ENCODE measurements at regions of chr4 and their contacts with region 1.

Region 1: DNA sequence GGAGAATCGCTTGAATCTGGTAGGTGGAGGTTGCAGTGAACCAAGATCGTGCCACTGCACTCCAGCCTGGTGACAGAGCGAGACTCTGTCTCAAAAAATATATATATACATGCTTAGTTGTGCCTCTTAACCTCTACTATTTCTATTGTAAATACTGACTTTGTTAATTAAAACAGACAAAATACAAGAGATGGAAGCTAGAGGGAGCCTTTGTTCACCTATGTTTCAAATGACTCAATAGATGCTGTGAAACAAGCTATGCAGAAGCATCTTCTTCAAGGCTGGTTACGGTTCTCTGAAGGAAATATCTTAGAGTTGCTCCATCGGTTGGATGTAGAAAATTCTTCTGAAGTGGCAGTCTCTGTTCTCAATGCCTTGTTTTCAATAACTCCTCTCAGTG is 6.2 kb downstream of the NCAPG start:
- DNase-seq: peak; percentile 24
- H3K4me3 ChIP-seq: peak overlapping the region in 1 of 2 experiments; percentile 33; a peak in 1 of 4 replicates
- H3K27ac ChIP-seq: no peak overlapping the region; a peak in 2 of 4 replicates
- H3K4me1 ChIP-seq: peaks cover 0 to 6% of the 10 kb centered on the region in 2 experiments; a peak in 2 of 4 replicates
- H3K27me3 ChIP-seq: no peaks in the 10 kb centered on the region
- CTCF ChIP-seq: peak; percentile 71
- EP300 ChIP-seq: no peak
- RAD21 ChIP-seq: peak; percentile 80

Region 2: GRCh38 chr4:17985832-17986231 is 168.8 kb after region 1 on chr4:
- CTCF ChIA-PET with region 1: no interaction called
- POLR2A ChIA-PET with region 1: no interaction called
- DNase-seq: no peak
- H3K4me3 ChIP-seq: no peak overlapping the region
- H3K27ac ChIP-seq: no peak overlapping the region
- H3K4me1 ChIP-seq: peaks cover 0 to 4% of the 10 kb centered on the region in 2 experiments; a peak in 1 of 4 replicates
- H3K27me3 ChIP-seq: no peaks in the 10 kb centered on the region
- CTCF ChIP-seq: no peak
- EP300 ChIP-seq: no peak
- RAD21 ChIP-seq: no peak

Region 3: DNA sequence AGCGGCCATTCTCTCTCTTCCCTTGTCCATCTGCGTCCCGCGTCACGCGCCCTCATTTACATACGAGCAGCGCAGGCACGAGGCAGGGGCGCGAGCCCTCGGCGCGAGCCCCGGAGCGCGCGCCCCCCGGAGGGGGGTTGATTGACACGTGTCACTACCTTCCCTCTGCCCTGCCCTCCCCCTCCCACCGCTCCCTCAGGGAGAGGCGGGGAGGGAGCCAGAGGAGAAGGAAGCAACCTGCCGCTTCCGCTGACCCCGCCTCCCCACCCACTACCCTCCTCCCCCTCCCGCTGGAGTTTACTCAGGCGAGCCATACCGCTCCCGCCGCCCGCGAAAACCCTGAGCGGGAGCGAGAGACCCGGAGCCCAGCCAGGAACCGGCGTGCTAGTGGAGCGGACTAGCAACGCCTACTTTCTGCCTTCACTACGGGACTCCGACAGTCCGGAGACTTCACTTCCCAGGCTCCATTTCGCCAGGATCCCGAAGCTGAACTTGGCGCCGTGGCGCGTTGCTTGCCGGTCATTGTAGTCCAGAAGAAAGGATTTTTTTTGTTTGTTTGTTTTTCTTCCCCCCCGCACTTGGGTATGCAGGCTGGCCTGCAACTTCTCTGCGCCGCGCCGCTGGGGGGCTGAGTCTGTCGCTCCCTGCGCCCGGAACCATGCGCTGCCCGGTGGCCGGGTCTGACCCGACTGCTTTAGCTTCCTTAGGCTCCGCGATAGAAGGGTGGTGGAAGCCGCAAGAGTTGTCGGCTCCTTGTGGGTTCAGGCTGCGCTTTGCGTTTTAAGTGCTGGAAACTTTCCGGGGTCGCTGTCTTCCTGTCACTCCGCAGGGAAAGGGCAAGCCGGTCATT is 204.9 kb after region 1 on chr4 and contains the start of gene LCORL:
- CTCF ChIA-PET with region 1: interaction called, 10 read pairs
- POLR2A ChIA-PET with region 1: interaction called, 5 read pairs
- DNase-seq: peak; percentile 92
- H3K4me3 ChIP-seq: peak within 1 kb of the TSS; percentile 92 to 96
- H3K27ac ChIP-seq: peak within 1 kb of the TSS; percentile 87 to 95
- H3K4me1 ChIP-seq: peaks cover 0 to 8% of the 10 kb centered on the region in 2 experiments; a peak in 2 of 4 replicates
- H3K27me3 ChIP-seq: no peaks in the 10 kb centered on the region
- CTCF ChIP-seq: 0 out of 2 replicates have a peak, but pooled peaks have one; percentile 16
- EP300 ChIP-seq: peak; percentile 6 to 26; a peak in 2 of 4 replicates
- RAD21 ChIP-seq: peak; percentile 20
- polyA plus RNA-seq, gene LCORL: 1.9 and 2.7 TPM in 2 replicates

Region 4: GRCh38 chr4:18366892-18367291 is 549.9 kb after region 1 on chr4:
- CTCF ChIA-PET with region 1: interaction called, 40 read pairs
- POLR2A ChIA-PET with region 1: no interaction called
- DNase-seq: peak; percentile 5
- H3K4me3 ChIP-seq: peak overlapping the region in 1 of 2 experiments; percentile 26; a peak in 1 of 4 replicates
- H3K27ac ChIP-seq: no peak overlapping the region
- H3K4me1 ChIP-seq: peaks cover 0 to 2% of the 10 kb centered on the region in 2 experiments; a peak in 1 of 4 replicates
- H3K27me3 ChIP-seq: no peaks in the 10 kb centered on the region
- CTCF ChIP-seq: peak; percentile 45
- EP300 ChIP-seq: no peak
- RAD21 ChIP-seq: peak; percentile 82

Region 5: DNA sequence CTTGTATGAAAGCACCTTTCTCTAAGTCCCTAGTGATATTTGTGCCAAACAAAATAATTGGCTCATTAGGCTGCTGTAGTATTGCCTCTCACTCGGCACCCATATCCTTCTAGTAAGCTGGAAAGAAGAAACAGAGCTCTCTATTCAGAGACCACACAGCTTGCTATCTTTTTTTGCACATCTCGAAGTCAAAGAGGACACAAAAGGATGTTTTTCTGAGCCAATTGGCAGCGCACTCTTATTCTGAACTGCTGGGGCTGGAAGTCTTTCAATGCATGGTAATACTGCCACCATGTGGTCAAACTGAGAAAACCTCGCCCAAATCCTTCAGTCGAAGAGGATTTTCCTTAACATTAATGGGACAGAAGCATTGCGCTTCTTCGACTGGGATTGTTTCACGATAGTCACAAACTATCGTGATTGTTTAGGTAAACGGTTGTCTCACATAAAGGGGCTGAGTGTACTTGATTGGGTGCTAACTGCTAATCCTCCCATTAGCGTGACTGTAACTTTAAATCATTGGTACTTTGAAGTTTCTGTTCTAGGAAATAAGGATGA is 776.5 kb after region 1 on chr4:
- CTCF ChIA-PET with region 1: interaction called, 30 read pairs
- POLR2A ChIA-PET with region 1: no interaction called
- DNase-seq: peak; percentile 63
- H3K4me3 ChIP-seq: peak overlapping the region; percentile 26 to 55
- H3K27ac ChIP-seq: peak overlapping the region in 1 of 2 experiments; percentile 16; a peak in 1 of 4 replicates
- H3K4me1 ChIP-seq: no peaks in the 10 kb centered on the region
- H3K27me3 ChIP-seq: peaks cover 7% of the 10 kb centered on the region; the same call in 1 of the 2 replicates
- CTCF ChIP-seq: peak; percentile 83
- EP300 ChIP-seq: no peak
- RAD21 ChIP-seq: peak; percentile 95

Measured in SK-N-SH (cell line).